HepG2 (cell line): ENCODE measurements at regions of chr17 and their contacts with region 1.

Region 1: GRCh38 chr17:28357061-28357900 is at the start of gene POLDIP2:
- DNase-seq: peak; percentile 87
- ATAC-seq: peak; percentile 99
- H3K4me3 ChIP-seq: peak within 1 kb of the TSS; percentile 93 to 98 (median 97)
- H3K27ac ChIP-seq: peak within 1 kb of the TSS; percentile 78
- H3K4me1 ChIP-seq: peaks cover 36% of the 10 kb centered on the region
- H3K27me3 ChIP-seq: no peaks in the 10 kb centered on the region; a peak in 1 of 5 replicates
- CTCF ChIP-seq: peak; percentile 24; the same call in 1 of the 2 replicates
- EP300 ChIP-seq: peak in 1 of 2 experiments; percentile 48; a peak in 1 of 4 replicates
- POLR2A ChIP-seq: peak; percentile 83 to 93
- RAD21 ChIP-seq: peak; percentile 73
- total RNA-seq, gene POLDIP2: 114 and 127 TPM in 2 replicates

Region 2: GRCh38 chr17:28346746-28347246 is 10.5 kb before region 1 on chr17:
- CTCF ChIA-PET with region 1: no interaction called
- POLR2A ChIA-PET with region 1: interaction called, 49 read pairs
- in situ Hi-C with region 1: no loop called
- intact Hi-C with region 1: no loop called
- DNase-seq: peak; percentile 69
- ATAC-seq: peak; percentile 86
- H3K4me3 ChIP-seq: no peak overlapping the region
- H3K27ac ChIP-seq: peak overlapping the region; percentile 43
- H3K4me1 ChIP-seq: peaks cover 26% of the 10 kb centered on the region
- H3K27me3 ChIP-seq: no peaks in the 10 kb centered on the region
- CTCF ChIP-seq: peak; percentile 84
- EP300 ChIP-seq: peak in 1 of 2 experiments; percentile 37; a peak in 2 of 4 replicates
- POLR2A ChIP-seq: no peak
- RAD21 ChIP-seq: peak; percentile 62; the same call in 1 of the 2 replicates

Region 3: GRCh38 chr17:28384281-28385036 is 27.2 kb after region 1 on chr17:
- CTCF ChIA-PET with region 1: no interaction called
- POLR2A ChIA-PET with region 1: interaction called, 14 read pairs
- in situ Hi-C with region 1: no loop called
- intact Hi-C with region 1: no loop called
- DNase-seq: no peak
- ATAC-seq: no peak
- H3K4me3 ChIP-seq: no peak overlapping the region
- H3K27ac ChIP-seq: no peak overlapping the region
- H3K4me1 ChIP-seq: peaks cover 26% of the 10 kb centered on the region
- H3K27me3 ChIP-seq: no peaks in the 10 kb centered on the region
- CTCF ChIP-seq: no peak
- EP300 ChIP-seq: no peak
- POLR2A ChIP-seq: no peak
- RAD21 ChIP-seq: no peak

Region 4: DNA sequence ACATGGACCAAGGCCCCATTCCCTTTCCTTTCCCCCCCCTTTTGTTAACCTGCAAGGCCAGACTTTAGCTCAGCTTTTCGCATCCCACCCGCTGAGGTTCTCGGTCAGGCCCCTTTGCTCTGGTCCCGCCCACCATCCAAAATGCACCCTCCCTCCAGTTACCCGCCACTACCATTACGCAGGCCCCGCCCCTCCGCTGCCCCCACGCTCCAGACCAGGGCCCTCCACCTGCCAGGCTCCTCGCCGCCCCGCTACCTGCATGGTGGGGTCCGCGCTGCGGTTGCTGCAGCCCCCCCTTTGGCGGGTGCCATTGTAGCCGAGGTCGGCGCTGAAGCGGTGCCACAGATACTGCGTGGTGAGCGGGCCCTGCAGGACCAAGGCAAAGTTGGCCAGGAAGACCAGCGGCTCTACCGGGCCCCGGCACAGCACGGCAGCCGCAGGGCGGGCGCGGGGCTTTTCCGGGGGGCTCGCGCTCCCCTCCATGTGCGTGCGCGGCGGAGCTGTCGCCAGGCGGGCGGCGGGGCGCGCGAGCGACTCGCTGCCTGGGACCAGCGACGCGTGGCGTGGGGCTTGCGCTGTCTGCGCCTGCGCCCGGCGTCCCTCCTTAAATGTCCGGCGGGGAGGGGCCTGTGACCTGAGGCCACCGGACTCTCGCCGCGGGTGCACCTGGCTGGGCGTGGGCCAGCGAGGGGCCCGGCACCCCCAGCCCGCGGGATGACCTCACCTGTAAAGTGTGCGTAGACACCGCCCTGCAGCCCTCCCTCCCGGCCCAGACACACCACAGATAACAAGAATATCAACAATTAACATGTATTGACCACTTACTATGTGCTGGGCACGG is 48.6 kb after region 1 on chr17 and contains the start of gene SLC46A1:
- CTCF ChIA-PET with region 1: no interaction called
- POLR2A ChIA-PET with region 1: interaction called, 31 read pairs
- in situ Hi-C with region 1: no loop called
- intact Hi-C with region 1: no loop called
- DNase-seq: peak; percentile 28
- ATAC-seq: peak; percentile 75
- H3K4me3 ChIP-seq: peak within 1 kb of the TSS; percentile 68 to 84 (median 76)
- H3K27ac ChIP-seq: peak within 1 kb of the TSS; percentile 67
- H3K4me1 ChIP-seq: peaks cover 27% of the 10 kb centered on the region
- H3K27me3 ChIP-seq: no peaks in the 10 kb centered on the region; a peak in 1 of 5 replicates
- CTCF ChIP-seq: no peak
- EP300 ChIP-seq: no peak
- POLR2A ChIP-seq: peak in 1 of 2 experiments; percentile 75; a peak in 2 of 4 replicates
- RAD21 ChIP-seq: no peak
- total RNA-seq, gene SLC46A1: 9.4 and 22.6 TPM in 2 replicates